Testis (tissue), 5 donors: ENCODE measurements at regions of chr11 and their contacts with region 1.

Region 1: DNA sequence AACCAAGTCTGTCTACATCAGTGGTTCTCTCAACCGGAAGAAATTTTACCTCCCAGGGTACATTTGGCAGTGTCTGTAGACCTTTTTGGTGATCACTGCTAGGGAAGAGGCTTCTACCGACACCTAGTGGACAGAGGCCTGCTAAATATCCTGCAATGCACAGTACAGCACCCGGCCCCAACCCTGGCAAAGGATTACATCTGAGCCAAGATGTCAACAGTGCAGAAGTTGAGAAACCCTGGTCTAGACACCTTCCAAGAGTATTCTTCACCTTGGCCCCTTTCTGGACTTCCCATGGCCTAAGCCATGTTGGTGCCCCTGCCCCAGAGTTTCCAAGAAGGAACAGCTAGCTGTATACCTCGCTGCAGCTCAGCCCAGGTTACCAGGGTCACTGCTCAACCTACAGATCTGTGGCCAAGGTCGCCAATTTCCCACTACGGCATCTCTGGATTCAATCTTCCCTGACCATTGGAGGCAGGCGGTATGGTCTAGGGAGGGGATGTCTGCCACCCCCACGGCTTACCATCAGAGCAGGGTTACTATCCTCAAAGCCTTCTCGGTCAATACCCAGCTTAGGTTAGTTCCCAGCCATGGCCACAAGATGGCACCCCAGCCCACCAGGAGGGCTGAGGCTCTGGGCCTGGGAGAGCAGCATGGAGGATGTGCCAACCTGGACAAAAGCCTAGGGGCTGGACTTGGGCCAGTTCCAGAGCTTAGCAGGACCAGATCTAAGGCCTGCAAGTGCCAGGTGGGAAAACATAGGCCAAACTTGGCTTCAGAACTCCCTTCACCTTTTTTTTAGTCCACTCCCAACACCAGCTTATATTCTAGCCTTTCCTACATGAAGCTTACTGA is 3.7 kb upstream of the KCNC1 start:
- DNase-seq: peak; percentile 86
- H3K4me3 ChIP-seq: no peak overlapping the region
- H3K27ac ChIP-seq: no peak overlapping the region
- H3K4me1 ChIP-seq: peaks cover 3% of the 10 kb centered on the region
- H3K27me3 ChIP-seq: no peaks in the 10 kb centered on the region
- CTCF ChIP-seq: peak; percentile 58 to 76 (median 69)
- POLR2A ChIP-seq: no peak

Region 2: GRCh38 chr11:17803754-17804334 is 73.0 kb after region 1 on chr11:
- intact Hi-C with region 1: no loop called
- DNase-seq: no peak
- H3K4me3 ChIP-seq: no peak overlapping the region
- H3K27ac ChIP-seq: no peak overlapping the region
- H3K4me1 ChIP-seq: no peaks in the 10 kb centered on the region
- H3K27me3 ChIP-seq: no peaks in the 10 kb centered on the region
- CTCF ChIP-seq: no peak
- POLR2A ChIP-seq: no peak

Region 3: GRCh38 chr11:17978553-17979287 is 247.9 kb after region 1 on chr11:
- intact Hi-C with region 1: loop called (anchors 10 kb)
- DNase-seq: peak; percentile 66
- H3K4me3 ChIP-seq: no peak overlapping the region
- H3K27ac ChIP-seq: no peak overlapping the region
- H3K4me1 ChIP-seq: no peaks in the 10 kb centered on the region
- H3K27me3 ChIP-seq: no peaks in the 10 kb centered on the region
- CTCF ChIP-seq: peak in 2 of 3 experiments; percentile 32 to 60
- POLR2A ChIP-seq: no peak